Activated naive CD4-positive, alpha-beta T cell treated with anti-CD3 and anti-CD28 coated beads for 36 hours (primary cell): ENCODE measurements at regions of chr10 and their contacts with region 1.

Region 1: DNA sequence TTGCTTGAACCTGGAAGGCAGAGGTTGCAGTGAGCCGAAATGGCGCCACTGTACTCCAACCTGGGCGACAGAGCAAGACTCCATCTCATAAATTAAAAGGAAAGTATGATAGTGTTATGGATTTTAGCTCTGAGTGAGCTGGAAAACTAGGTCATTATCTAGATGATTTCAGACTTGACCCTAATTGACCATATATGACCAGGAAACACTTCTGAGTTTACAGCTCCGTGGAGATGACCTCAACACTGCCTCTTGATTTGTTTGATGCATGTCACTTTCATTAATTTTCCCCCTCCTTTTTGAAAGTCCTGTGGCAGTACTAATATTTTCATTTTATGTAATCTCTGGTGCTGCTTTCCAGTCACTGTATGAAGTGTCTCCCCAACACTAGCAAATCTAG is 7.8 kb upstream of the SEC61A2 start:
- DNase-seq: no peak
- H3K4me3 Mint-ChIP-seq: no peak overlapping the region
- H3K27ac Mint-ChIP-seq: peak overlapping the region; percentile 98
- H3K4me1 Mint-ChIP-seq: peaks cover 30% of the 10 kb centered on the region
- H3K27me3 Mint-ChIP-seq: no peaks in the 10 kb centered on the region

Region 2: DNA sequence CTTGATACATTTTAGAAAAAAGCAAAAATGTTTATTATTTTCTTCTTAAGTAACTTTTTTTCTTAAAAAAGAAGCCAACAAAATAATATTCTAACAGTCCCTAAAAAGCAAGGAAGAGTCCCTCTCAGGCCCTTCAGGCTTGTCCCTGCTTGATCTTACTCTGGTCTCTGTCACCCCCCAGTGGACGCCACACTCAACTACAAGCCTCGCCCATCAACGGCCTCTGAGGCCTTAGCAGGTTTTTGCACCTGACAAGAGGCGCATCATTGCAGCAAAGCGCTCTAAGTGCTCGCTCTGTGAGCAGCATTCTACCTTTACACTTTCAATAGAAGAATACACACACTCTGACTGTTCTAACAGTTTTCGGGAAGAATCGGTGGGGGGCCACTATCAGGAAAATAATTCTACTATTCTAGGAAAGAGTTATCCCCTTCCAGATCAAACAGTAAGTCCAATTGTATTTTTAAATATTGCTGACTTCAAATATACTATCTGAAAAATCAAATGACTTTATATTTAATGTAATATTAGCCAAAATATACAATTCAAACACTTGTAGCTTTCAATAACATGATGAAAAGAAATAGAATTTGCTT is 649.4 kb before region 1 on chr10:
- CTCF ChIA-PET with region 1: no interaction called
- intact Hi-C with region 1: no loop called
- DNase-seq: peak; percentile 85
- H3K4me3 Mint-ChIP-seq: no peak overlapping the region
- H3K27ac Mint-ChIP-seq: no peak overlapping the region
- H3K4me1 Mint-ChIP-seq: no peaks in the 10 kb centered on the region
- H3K27me3 Mint-ChIP-seq: no peaks in the 10 kb centered on the region

Region 3: DNA sequence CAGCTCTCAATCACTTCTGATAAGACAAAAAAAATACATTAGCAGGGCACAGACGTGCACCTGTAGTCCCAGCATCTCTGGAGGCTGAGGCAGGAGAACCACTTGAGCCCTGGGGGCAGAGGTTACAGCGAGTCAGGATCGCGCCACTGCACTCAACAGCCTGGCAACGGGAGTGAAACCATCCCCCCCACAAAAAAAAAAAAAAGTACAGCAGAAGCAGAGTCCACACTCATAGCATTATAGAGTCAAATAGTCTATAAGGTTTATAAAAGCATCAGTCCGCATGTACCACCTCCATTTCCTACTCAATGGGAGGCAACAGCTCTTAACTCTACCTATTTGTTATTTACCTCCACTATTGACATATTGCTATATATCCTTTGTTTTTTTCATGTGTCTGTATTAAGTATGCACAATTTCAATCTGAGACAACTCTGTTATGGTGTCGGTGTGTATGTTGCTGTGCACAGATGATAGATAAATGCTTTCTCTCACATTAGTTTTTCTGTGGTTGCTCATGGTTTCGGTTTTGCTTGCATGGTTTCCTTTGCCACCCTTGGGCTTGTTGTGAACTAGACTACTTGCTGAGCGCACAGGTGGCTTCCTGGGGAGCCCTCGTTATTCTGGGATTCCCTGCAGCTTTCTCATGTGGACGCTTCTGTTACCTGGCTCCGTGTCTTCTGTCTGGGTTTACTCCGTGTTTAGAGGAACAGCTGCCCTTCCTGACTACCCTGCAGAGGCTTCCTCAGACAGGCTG is 258.1 kb before region 1 on chr10:
- CTCF ChIA-PET with region 1: no interaction called
- intact Hi-C with region 1: loop called (anchors 5 kb)
- DNase-seq: peak; percentile 77
- H3K4me3 Mint-ChIP-seq: no peak overlapping the region
- H3K27ac Mint-ChIP-seq: no peak overlapping the region
- H3K4me1 Mint-ChIP-seq: peaks cover 19% of the 10 kb centered on the region
- H3K27me3 Mint-ChIP-seq: no peaks in the 10 kb centered on the region

Region 4: GRCh38 chr10:12042797-12043651 is 78.6 kb before region 1 on chr10 and contains the start of gene UPF2:
- CTCF ChIA-PET with region 1: no interaction called
- intact Hi-C with region 1: loop called (anchors 1 kb)
- DNase-seq: peak; percentile 98
- H3K4me3 Mint-ChIP-seq: peak within 1 kb of the TSS; percentile 98
- H3K27ac Mint-ChIP-seq: peak within 1 kb of the TSS; percentile 99
- H3K4me1 Mint-ChIP-seq: peaks cover 33% of the 10 kb centered on the region
- H3K27me3 Mint-ChIP-seq: no peaks in the 10 kb centered on the region
- total RNA-seq, gene UPF2: 27.5 to 29.5 TPM

Region 5: GRCh38 chr10:12181065-12181775 is 59.5 kb after region 1 on chr10:
- CTCF ChIA-PET with region 1: no interaction called
- intact Hi-C with region 1: loop called (anchors 1 kb)
- DNase-seq: peak; percentile 74
- H3K4me3 Mint-ChIP-seq: no peak overlapping the region
- H3K27ac Mint-ChIP-seq: peak overlapping the region; percentile 81
- H3K4me1 Mint-ChIP-seq: peaks cover 17% of the 10 kb centered on the region
- H3K27me3 Mint-ChIP-seq: no peaks in the 10 kb centered on the region

Region 6: GRCh38 chr10:12195603-12196506 is 74.2 kb after region 1 on chr10 and contains the starts of genes CDC123 and NUDT5:
- CTCF ChIA-PET with region 1: no interaction called
- intact Hi-C with region 1: loop called (anchors 2 kb)
- DNase-seq: peak; percentile 93
- H3K4me3 Mint-ChIP-seq: peak within 1 kb of the TSS; percentile 96
- H3K27ac Mint-ChIP-seq: peak within 1 kb of the TSS; percentile 98
- H3K4me1 Mint-ChIP-seq: peaks cover 58% of the 10 kb centered on the region
- H3K27me3 Mint-ChIP-seq: no peaks in the 10 kb centered on the region
- total RNA-seq, gene CDC123: 108 to 117 TPM
- total RNA-seq, gene NUDT5: 97.1 to 100 TPM

Region 7: DNA sequence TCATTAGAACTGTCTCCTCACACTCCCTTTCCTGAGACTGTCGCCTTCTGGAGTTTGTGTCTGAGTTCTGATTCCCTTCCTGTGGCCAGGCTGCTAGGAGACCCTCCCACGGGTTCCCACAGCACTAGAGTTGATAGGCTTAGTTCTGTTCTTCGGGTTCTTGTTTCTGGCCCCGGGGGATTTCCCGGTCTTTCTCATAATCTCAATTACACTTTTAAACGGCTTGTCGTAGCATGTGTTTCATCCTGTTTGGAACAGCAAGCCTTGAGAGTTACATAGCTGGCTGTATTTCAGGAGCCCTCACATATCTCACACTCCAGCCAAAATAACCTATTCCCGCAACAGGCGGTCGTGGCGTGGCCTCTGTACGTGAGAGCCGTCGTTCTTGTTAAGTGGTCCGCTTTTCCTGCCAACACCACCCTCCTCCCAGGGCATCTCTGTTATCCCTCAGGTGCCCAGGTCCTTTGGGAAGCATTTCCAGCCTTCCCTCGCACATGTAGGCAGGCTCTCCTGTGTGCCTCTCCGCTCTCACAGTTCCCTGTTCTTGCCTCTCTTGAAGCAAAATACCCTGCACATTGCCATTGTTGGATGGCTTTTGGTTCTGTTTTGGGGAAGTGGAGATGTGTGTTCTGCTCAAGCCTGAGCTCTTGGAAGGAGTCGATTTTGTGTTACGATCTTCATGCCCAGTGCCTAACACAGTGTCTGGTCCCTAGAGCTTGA is 120.3 kb after region 1 on chr10:
- CTCF ChIA-PET with region 1: no interaction called
- intact Hi-C with region 1: loop called (anchors 5 kb)
- DNase-seq: peak; percentile 84
- H3K4me3 Mint-ChIP-seq: peak overlapping the region; percentile 36
- H3K27ac Mint-ChIP-seq: peak overlapping the region; percentile 85
- H3K4me1 Mint-ChIP-seq: peaks cover 27% of the 10 kb centered on the region
- H3K27me3 Mint-ChIP-seq: no peaks in the 10 kb centered on the region

Region 8: DNA sequence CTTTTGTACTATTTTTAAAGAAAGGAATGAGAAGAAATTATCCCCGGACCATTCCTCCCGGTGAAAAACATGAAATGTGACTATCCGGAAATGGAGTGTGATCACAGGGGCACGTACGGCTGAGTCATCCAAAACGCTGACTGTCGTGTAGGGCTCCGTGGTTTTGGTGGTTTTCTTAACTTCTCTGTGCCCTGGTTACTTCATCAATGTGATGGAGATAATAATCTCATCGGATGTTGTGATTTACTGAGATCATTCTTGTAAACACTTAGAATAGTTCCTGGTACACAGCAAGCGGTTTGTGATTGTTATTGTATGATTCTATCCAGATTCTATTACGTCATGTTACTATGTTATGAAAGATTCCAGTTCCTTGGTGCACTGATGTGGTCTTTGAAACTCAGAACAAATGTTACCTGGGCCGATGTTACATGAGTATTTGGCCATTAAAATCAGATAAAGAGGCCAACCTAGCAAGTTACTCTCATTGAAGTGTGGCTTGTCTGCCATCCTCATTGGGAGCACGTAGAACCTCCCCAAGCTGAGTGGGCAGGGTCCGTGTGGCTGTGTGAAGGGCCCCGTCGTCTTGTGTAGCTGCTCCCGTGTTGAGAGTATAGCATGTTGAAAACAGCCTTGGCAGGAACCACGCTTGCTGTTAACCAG is 327.2 kb after region 1 on chr10:
- CTCF ChIA-PET with region 1: no interaction called
- intact Hi-C with region 1: loop called (anchors 2 kb)
- DNase-seq: peak; percentile 86
- H3K4me3 Mint-ChIP-seq: peak overlapping the region; percentile 62
- H3K27ac Mint-ChIP-seq: peak overlapping the region; percentile 52
- H3K4me1 Mint-ChIP-seq: peaks cover 40% of the 10 kb centered on the region
- H3K27me3 Mint-ChIP-seq: no peaks in the 10 kb centered on the region